AG04449 (cell line): ENCODE measurements at regions of chr12 and their contacts with region 1.

Region 1: GRCh38 chr12:79547735-79548609 is 142.8 kb downstream of the PAWR start:
- DNase-seq: no peak
- H3K4me3 ChIP-seq: no peak overlapping the region
- CTCF ChIP-seq: peak; percentile 55

Region 2: GRCh38 chr12:79420146-79420618 is 127.8 kb before region 1 on chr12:
- CTCF ChIA-PET with region 1: interaction called, 26 read pairs
- POLR2A ChIA-PET with region 1: interaction called, 17 read pairs
- DNase-seq: peak; percentile 93
- H3K4me3 ChIP-seq: no peak overlapping the region
- CTCF ChIP-seq: peak; percentile 45

Region 3: DNA sequence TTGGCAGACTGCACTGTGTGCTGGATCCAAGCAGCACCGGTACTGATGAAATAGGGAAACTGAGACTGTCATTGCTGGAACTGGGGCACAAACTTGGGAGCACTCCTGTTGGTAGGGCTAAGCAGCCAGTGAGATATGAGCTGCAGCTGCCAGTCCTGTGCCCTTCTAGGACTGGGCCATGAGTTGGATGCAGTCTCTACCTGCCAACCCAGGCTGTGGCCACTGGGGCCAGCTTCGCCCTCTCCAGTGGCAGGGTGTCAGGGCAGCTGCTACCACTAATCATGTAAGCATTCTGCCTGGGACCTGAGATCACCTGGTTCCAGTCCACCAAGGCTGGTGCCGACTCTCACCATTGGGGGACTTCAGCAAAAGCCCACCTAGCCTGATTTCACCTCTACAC is 21.7 kb after region 1 on chr12:
- CTCF ChIA-PET with region 1: no interaction called
- POLR2A ChIA-PET with region 1: no interaction called
- DNase-seq: no peak
- H3K4me3 ChIP-seq: no peak overlapping the region
- CTCF ChIP-seq: no peak